Common myeloid progenitor, CD34-positive (primary cell): ENCODE measurements at regions of chr5 and their contacts with region 1.

Region 1: DNA sequence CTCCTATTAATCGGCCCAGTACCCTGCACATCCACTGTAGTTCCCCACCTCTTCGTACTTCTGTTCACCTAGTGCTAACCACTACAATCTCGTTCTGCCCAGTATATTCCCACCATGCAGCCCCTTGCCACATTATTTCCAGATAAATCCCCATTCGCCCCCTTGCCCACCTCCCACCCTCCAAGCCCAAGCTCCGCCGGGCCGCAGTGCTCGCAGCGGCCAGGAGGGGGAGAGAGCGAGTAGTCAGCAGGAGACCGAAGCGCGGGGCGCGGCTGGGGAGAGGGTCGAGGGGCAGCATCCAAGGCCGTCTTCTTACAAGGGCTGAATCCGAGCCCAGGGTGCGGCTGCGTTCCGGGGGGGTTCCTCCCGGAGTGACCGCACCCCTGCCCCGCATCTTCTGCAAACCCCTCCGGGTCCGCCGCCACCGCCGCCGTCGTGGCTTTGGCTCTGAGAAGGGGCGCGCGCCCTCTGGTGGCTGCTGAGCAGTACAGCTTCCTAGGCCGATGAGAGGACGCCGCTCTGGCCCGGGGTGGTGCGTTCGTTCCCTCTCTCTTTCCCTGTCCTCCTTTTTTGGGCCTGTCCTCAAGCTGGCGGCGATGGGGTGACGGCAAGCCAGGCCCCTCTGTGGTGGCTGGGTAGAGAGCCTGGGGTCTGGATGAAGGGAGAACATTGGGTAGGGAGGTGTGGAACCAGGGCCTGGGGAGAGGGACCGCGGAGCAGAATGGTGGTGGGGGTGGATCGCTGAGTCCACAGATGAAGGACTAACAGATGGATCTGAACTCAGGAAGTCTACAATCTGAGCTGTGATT is 30.0 kb upstream of the PSD2 start:
- DNase-seq: peak; percentile 72 to 83 (median 83)
- H3K4me3 ChIP-seq: peak overlapping the region; percentile 30 to 78 (median 63)
- H3K27ac ChIP-seq: no peak overlapping the region
- H3K4me1 ChIP-seq: peaks cover 0 to 20% (median 7%) of the 10 kb centered on the region in 4 experiments
- H3K27me3 ChIP-seq: peaks cover 0 to 30% (median 8%) of the 10 kb centered on the region in 5 experiments

Region 2: DNA sequence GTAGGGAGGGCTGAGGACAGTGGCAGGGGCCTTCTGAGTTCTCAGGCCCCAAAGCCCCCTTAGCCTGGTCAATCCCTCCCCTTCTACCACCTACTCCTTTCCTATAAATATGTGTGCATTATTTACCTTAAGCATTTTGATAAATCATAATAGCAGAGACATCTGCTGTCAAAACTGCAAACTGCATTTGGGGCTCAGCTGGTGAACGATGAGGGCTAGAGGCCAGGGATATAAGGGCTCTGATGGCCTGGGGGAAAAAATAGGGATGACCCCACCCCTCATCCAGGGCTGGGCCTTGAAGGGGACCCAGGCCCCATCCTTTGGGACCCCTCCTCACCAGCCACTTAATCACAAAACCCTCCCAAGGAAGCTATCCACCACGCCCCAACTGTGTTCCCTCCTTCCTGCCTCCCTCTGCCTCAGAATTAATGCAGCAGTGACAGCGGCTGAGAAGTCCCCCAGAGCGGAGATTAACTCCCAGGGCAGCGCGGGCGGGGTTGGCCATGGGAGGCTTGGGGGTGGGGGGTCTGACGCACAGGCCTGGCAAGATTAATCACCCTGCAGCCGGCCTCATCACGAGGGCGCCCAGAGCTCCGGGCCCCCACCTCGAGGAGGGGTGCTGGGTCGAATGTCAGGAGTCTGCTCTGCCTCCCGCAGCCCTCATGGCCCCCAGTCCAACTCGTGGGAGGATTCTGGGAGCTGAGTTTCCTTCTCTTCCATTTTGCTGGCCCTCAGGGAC is 75.4 kb before region 1 on chr5:
- CTCF ChIA-PET with region 1: interaction called, 12 read pairs
- POLR2A ChIA-PET with region 1: interaction called, 3 read pairs
- DNase-seq: peak in 2 of 3 donors; percentile 63 to 64
- H3K4me3 ChIP-seq: peak overlapping the region in 2 of 7 experiments; percentile 36 to 61
- H3K27ac ChIP-seq: peak overlapping the region in 1 of 2 experiments; percentile 32
- H3K4me1 ChIP-seq: peaks cover 0 to 79% (median 45%) of the 10 kb centered on the region in 4 experiments
- H3K27me3 ChIP-seq: no peaks in the 10 kb centered on the region

Region 3: DNA sequence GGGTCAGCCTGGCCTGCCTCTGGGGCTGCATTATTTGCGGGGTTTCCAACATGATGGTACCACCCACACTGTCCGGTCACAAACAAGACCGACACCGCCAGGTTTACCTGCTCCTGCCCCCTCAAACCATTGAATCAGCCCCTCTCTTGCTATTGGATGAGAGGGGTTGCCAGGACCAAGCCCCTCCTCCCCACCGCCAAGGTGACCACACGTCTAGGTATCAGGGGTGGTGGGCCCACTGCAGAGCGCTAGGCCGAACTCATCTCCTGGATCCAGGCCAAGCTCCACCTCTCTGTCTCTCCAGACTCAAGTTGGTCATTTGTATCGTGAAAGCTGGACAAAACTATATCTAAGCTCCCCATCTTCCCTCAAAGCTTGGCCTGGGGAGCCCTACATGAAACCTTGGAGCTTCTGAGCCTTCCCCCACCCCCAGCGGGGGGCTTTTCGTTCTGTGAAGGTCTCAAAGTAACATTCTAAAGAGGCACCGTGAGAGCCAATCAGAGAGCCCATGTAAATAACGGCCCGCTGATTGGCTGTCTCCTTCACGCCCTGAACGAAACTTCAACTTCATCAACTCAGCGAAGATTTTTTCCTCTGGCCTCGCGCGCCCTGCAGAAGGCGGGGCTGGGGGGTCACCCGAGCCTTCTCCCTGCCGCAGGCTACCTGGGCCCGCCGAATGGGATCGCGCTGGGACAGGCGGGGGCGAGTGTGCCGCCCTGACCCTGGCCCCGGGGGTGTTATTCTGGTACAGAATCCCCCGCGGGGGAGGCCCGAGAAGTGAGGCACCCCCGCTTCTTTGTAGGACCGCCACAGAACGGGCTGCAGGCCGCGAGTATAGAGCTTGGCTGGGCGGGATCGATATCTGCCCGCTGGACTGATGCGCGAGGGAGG is 19.6 kb before region 1 on chr5:
- CTCF ChIA-PET with region 1: interaction called, 11 read pairs
- POLR2A ChIA-PET with region 1: no interaction called
- DNase-seq: peak; percentile 57 to 75 (median 75)
- H3K4me3 ChIP-seq: peak overlapping the region in 3 of 7 experiments; percentile 33 to 68 (median 54)
- H3K27ac ChIP-seq: no peak overlapping the region
- H3K4me1 ChIP-seq: peaks cover 0 to 45% (median 41%) of the 10 kb centered on the region in 4 experiments
- H3K27me3 ChIP-seq: peaks cover 0 to 49% (median 21%) of the 10 kb centered on the region in 5 experiments

Region 4: GRCh38 chr5:139752506-139753473 is 12.8 kb before region 1 on chr5:
- CTCF ChIA-PET with region 1: interaction called, 19 read pairs
- POLR2A ChIA-PET with region 1: no interaction called
- DNase-seq: no peak
- H3K4me3 ChIP-seq: no peak overlapping the region
- H3K27ac ChIP-seq: no peak overlapping the region
- H3K4me1 ChIP-seq: peaks cover 0 to 23% (median 19%) of the 10 kb centered on the region in 4 experiments
- H3K27me3 ChIP-seq: peaks cover 0 to 91% (median 41%) of the 10 kb centered on the region in 5 experiments

Region 5: GRCh38 chr5:139787568-139788293 is 22.1 kb after region 1 on chr5:
- CTCF ChIA-PET with region 1: interaction called, 10 read pairs
- POLR2A ChIA-PET with region 1: no interaction called
- DNase-seq: peak; percentile 69 to 78 (median 71)
- H3K4me3 ChIP-seq: peak overlapping the region; percentile 49 to 87 (median 73)
- H3K27ac ChIP-seq: no peak overlapping the region
- H3K4me1 ChIP-seq: peaks cover 0 to 9% (median 8%) of the 10 kb centered on the region in 4 experiments
- H3K27me3 ChIP-seq: peaks cover 0 to 18% (median 4%) of the 10 kb centered on the region in 5 experiments

Region 6: DNA sequence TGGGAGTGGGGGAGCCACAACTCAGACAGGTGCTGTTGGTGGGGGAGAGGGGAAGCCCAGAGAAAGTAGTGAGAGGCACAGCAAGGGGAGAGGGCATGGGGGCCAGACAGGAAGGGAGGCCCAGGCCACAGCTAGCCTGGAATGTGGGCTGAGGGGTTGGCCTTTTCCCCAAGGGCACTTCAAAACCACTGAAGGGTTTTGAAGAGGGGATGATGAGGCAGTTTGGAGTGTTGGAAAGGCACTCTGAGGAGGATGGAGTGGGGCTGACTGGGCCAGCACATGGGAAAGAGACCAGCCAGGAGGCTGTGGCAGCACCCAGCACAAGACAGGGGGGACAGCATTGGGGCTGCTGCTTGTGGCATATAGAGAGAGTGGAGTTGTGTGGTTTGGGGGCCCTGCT is 33.7 kb after region 1 on chr5:
- CTCF ChIA-PET with region 1: no interaction called
- POLR2A ChIA-PET with region 1: no interaction called
- DNase-seq: no peak
- H3K4me3 ChIP-seq: no peak overlapping the region
- H3K27ac ChIP-seq: no peak overlapping the region
- H3K4me1 ChIP-seq: peaks cover 0 to 10% (median 3%) of the 10 kb centered on the region in 4 experiments
- H3K27me3 ChIP-seq: peaks cover 7 to 87% (median 34%) of the 10 kb centered on the region in 5 experiments